Mucosa of descending colon (tissue), 3 donors: ENCODE measurements at regions of chrX and their contacts with region 1.

Region 1: DNA sequence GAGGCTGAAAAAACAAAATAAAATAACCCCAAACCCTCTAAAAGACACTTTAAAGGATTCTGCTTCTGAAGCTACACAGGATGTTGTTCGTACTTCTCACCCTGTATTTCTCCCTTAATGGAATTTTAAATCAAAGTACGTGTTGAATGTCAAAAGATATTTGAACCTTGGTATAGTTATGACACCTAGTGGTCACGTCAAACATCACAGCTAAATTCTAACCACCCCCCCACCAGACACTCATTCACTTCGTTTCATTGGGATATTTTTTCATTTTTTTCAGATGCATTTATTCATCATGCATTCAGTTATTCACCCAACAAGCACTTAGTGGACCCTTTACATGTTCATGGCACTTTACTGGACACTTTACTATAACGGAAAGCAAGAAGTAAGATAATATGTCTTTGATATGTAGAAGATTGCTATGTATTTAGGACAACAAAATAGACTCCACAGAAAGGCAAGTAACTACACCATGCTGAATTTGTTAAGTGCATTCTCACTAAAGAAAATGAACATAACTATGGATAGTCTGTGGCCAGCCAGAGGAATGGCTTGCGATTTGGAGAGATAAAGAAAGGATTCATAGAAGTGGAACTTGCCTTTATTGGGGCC is 62.5 kb upstream of the GPR174 start:
- DNase-seq: peak in 1 of 3 donors; percentile 53
- ATAC-seq: peak; percentile 80
- H3K4me3 ChIP-seq: no peak overlapping the region
- H3K4me1 ChIP-seq: no peaks in the 10 kb centered on the region
- CTCF ChIP-seq: no peak

Region 2: DNA sequence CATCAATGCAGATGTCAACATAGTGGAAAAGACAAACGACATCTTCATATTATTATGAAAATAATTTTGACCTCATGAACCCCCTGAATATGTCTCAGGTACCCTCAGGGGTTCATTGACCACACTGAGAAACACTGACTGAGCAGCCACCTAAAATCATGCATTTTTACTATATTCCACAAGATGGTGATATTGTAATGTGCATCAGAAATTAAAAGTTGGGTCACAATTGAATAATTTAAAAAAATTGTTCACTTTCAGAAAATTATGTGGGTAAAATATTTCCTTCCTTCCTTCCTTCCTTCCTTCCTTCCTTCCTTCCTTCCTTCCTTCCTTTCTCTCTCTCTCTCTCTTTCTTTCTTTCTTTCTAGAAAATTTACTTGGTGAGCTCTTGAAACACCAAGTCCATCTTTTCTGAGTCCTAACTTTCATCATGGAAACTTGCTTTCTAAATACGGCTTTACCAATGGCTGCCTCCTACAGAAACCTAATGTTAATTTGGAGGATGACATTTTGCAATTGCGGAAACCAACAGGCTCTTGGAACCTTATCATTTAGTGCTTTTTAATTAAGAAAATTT is 526.5 kb before region 1 on chrX:
- intact Hi-C with region 1: loop called in 1 of 2 experiments (anchors 5 kb)
- DNase-seq: no peak
- ATAC-seq: no peak
- H3K4me3 ChIP-seq: no peak overlapping the region
- H3K4me1 ChIP-seq: no peaks in the 10 kb centered on the region
- CTCF ChIP-seq: no peak

Region 3: DNA sequence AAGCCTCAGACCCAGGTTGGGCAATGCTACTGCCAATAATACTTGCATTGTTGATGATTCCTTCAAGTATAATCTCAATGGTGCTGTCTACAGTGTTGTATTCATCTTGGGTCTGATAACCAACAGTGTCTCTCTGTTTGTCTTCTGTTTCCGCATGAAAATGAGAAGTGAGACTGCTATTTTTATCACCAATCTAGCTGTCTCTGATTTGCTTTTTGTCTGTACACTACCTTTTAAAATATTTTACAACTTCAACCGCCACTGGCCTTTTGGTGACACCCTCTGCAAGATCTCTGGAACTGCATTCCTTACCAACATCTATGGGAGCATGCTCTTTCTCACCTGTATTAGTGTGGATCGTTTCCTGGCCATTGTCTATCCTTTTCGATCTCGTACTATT is 327.1 kb before region 1 on chrX:
- intact Hi-C with region 1: loop called in 1 of 2 experiments (anchors 10 kb)
- DNase-seq: no peak
- ATAC-seq: peak; percentile 47
- H3K4me3 ChIP-seq: no peak overlapping the region
- H3K4me1 ChIP-seq: no peaks in the 10 kb centered on the region
- CTCF ChIP-seq: no peak